ENCODE measurements at regions of chr13 and their contacts with region 1.

Region 1: GRCh38 chr13:37602747-37603381 is 4.3 kb upstream of the POSTN start:
- DNase-seq: no peak

Region 2: DNA sequence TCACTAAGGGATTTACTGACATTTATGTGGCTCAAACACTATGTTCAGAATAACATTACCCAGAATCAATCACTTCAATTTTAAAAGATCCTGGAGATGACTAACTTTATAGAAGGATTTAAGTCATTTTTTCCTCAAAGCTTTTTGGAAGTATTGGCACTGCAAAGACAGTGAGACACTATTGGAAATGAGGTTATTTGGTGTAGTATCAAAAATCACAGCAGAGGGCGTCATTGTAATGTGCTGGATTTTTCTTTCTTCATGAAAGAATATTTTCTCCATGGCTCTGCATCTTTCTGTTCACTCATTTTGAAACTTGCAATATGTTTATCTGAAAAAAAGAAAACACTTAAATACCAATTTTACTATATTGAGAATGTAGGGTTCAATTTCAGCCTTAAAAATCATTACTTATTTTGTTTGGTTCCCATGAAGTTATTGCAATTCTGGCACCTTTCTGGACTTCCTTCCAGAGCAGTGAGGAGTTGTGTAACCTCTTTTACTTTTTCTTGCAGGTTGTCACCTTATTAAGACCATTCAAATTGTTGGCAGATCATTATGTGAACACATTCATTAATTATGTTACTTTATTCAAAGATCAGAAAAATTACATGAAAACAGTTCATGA is 493.7 kb before region 1 on chr13:
- intact Hi-C with region 1: loop called (anchors 1 kb)
- DNase-seq: no peak